MCF 10A (cell line): ENCODE measurements at regions of chr13 and their contacts with region 1.

Region 1: GRCh38 chr13:41610379-41610801 is 153.0 kb downstream of the RGCC start:
- DNase-seq: peak; percentile 89
- H3K4me3 Mint-ChIP-seq: peak overlapping the region; percentile 3
- H3K27ac Mint-ChIP-seq: peak overlapping the region; percentile 97
- H3K4me1 Mint-ChIP-seq: peaks cover 45% of the 10 kb centered on the region
- H3K27me3 Mint-ChIP-seq: no peaks in the 10 kb centered on the region
- CTCF ChIP-seq: no peak

Region 2: DNA sequence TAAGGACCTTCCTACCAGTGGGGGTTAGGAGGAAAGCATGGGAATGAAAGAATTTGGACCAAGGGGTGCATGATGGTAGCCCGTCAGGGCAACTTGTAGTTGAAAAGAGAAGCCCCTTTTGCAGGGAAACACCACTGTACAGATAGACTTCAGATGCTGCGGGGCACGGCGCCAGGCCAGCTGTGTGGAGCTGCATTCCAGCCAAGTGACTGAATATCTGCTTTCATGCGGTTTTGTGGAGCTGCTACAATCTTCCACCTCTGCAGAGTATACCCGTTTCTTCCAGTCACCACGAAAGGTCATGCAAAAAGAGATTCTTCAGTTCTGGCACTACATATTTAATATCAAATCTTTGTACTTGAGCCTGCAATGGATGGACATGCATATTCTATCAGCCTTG is 48.3 kb before region 1 on chr13:
- CTCF ChIA-PET with region 1: no interaction called
- POLR2A ChIA-PET with region 1: no interaction called
- intact Hi-C with region 1: no loop called
- DNase-seq: peak; percentile 23
- H3K4me3 Mint-ChIP-seq: no peak overlapping the region
- H3K27ac Mint-ChIP-seq: no peak overlapping the region
- H3K4me1 Mint-ChIP-seq: peaks cover 10% of the 10 kb centered on the region
- H3K27me3 Mint-ChIP-seq: no peaks in the 10 kb centered on the region
- CTCF ChIP-seq: no peak

Region 3: DNA sequence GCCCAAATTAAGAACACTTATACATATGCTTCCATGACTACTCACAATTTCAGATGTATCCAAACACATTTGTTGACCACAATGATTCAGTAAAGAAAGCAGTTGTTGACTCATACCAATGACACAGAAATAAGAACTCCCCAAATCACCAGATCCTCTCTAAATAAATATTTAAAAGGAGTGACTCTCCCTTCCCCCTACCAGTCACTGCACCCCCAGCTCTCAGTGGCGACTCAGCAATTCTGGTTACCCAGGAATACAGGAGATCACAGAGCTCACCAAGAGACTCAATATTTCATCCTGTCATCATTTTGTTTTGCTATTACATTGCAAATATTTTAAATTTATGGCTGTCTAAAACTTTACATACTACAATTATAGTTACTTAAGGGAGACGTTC is 21.5 kb before region 1 on chr13:
- CTCF ChIA-PET with region 1: interaction called, 3 read pairs
- POLR2A ChIA-PET with region 1: interaction called, 10 read pairs
- intact Hi-C with region 1: no loop called
- DNase-seq: peak; percentile 75
- H3K4me3 Mint-ChIP-seq: no peak overlapping the region
- H3K27ac Mint-ChIP-seq: peak overlapping the region; percentile 96
- H3K4me1 Mint-ChIP-seq: peaks cover 20% of the 10 kb centered on the region
- H3K27me3 Mint-ChIP-seq: no peaks in the 10 kb centered on the region
- CTCF ChIP-seq: no peak